ENCODE measurements at regions of chr16 and their contacts with region 1.

Region 1: DNA sequence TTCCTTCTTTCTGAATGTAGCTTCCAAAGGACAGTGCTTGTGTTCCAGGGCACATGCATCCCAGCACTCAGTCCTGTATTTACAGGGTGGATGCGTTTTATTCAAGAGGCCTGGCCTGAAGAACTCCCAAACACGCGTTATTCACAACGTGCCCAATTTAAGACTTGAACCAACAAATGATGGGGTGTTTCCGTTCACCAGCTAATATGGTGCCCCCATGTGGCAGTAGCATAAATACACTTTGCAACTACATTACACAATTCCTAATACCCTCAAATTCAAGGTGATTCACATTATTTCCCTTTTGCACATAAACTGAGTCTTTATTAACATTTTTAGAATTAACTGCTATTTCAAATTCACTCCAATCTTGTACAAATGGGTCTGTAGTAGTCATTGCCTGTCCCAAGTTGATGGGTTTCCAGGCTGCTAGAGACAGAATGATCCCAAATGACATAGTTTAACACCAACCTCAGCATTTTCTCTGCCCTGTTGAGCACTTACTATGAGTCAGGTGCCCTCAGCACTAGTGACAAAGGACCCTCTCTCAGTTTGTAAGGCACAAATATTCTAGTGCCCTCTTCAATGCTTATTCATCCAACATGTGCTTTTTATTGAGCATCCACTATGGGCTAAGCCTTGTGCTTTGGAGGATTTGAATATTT is 26.9 kb downstream of the HSD17B2 start:
- DNase-seq: peak; percentile 40
- ATAC-seq: no peak
- H3K4me3 Mint-ChIP-seq: no peak overlapping the region
- H3K27ac Mint-ChIP-seq: no peak overlapping the region
- H3K4me1 Mint-ChIP-seq: no peaks in the 10 kb centered on the region
- H3K27me3 Mint-ChIP-seq: peaks cover 3% of the 10 kb centered on the region

Region 2: GRCh38 chr16:82050909-82051357 is 11.1 kb before region 1 on chr16:
- CTCF ChIA-PET with region 1: interaction called, 14 read pairs
- POLR2A ChIA-PET with region 1: no interaction called
- DNase-seq: no peak
- ATAC-seq: no peak
- H3K4me3 Mint-ChIP-seq: no peak overlapping the region
- H3K27ac Mint-ChIP-seq: no peak overlapping the region
- H3K4me1 Mint-ChIP-seq: no peaks in the 10 kb centered on the region
- H3K27me3 Mint-ChIP-seq: peaks cover 31% of the 10 kb centered on the region